ENCODE measurements at regions of chr1 and their contacts with region 1.

Region 1: DNA sequence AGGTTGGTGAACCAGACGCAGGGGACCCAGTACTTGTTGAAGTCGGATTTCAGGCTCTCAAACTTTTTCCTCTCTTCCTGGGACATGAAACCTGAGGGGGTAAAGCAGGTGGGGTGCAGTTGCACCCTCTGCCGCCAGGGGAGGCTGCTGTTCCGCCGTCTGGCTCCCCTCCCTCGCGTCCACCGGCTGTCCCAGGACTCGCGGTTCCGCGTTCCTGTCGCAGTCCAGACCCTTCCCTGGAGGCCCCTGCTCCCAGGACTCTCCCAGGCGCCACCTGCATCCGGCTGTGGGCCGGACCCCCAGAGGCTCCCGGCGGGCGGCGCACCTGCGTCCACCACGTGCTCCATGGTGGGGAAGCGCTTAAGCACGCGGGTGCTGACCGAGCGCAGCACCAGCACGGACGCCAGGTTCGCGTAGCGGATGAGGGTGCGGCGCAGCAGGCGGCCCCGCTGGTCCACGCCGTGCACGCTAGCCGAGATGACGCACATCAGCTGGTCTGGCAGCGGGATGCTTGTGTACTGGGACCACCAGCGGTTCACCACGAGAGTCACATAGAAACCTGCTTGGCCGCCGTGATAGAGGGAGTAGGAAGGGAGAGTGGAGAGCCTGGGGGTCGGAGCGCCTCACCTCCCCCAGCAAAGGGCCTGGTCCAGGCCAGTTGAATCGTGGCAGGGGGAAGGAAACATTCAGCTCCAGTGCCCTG is 1.7 kb downstream of the BEST4 start:
- DNase-seq: peak in 1 of 3 donors; percentile 72
- ATAC-seq: peak; percentile 75 to 92 (median 82)
- H3K4me3 ChIP-seq: peak overlapping the region; percentile 37 to 45 (median 42)
- H3K27ac ChIP-seq: no peak overlapping the region
- H3K4me1 ChIP-seq: peaks cover 0 to 20% (median 0%) of the 10 kb centered on the region in 4 donors
- H3K27me3 ChIP-seq: no peaks in the 10 kb centered on the region
- CTCF ChIP-seq: peak; percentile 80 to 96 (median 86)
- POLR2A ChIP-seq: no peak

Region 2: GRCh38 chr1:44835738-44836675 is 49.7 kb after region 1 on chr1:
- intact Hi-C with region 1: loop called in 1 of 2 experiments (anchors 10 kb)
- DNase-seq: peak; percentile 79 to 83 (median 80)
- ATAC-seq: peak; percentile 88 to 94 (median 92)
- H3K4me3 ChIP-seq: no peak overlapping the region
- H3K27ac ChIP-seq: no peak overlapping the region
- H3K4me1 ChIP-seq: no peaks in the 10 kb centered on the region
- H3K27me3 ChIP-seq: no peaks in the 10 kb centered on the region
- CTCF ChIP-seq: peak; percentile 68 to 90 (median 88)
- POLR2A ChIP-seq: no peak

Region 3: GRCh38 chr1:45141247-45142003 is 355.1 kb after region 1 on chr1:
- intact Hi-C with region 1: no loop called
- DNase-seq: no peak
- ATAC-seq: no peak
- H3K4me3 ChIP-seq: no peak overlapping the region
- H3K27ac ChIP-seq: no peak overlapping the region
- H3K4me1 ChIP-seq: no peaks in the 10 kb centered on the region
- H3K27me3 ChIP-seq: no peaks in the 10 kb centered on the region
- CTCF ChIP-seq: no peak
- POLR2A ChIP-seq: no peak